Activated CD4-positive, alpha-beta T cell treated with anti-CD3 and anti-CD28 coated beads, Interleukin-2, amount 10 ng/mL, durations not matched to agents 24 days and 14 days (primary cell): ENCODE measurements at regions of chr11 and their contacts with region 1.

Region 1: GRCh38 chr11:83007909-83008580 is 63.7 kb downstream of the RAB30 start:
- DNase-seq: no peak
- H3K4me3 Mint-ChIP-seq: peak overlapping the region; percentile 6
- H3K27ac Mint-ChIP-seq: no peak overlapping the region
- H3K4me1 Mint-ChIP-seq: peaks cover 35% of the 10 kb centered on the region
- H3K27me3 Mint-ChIP-seq: no peaks in the 10 kb centered on the region

Region 2: DNA sequence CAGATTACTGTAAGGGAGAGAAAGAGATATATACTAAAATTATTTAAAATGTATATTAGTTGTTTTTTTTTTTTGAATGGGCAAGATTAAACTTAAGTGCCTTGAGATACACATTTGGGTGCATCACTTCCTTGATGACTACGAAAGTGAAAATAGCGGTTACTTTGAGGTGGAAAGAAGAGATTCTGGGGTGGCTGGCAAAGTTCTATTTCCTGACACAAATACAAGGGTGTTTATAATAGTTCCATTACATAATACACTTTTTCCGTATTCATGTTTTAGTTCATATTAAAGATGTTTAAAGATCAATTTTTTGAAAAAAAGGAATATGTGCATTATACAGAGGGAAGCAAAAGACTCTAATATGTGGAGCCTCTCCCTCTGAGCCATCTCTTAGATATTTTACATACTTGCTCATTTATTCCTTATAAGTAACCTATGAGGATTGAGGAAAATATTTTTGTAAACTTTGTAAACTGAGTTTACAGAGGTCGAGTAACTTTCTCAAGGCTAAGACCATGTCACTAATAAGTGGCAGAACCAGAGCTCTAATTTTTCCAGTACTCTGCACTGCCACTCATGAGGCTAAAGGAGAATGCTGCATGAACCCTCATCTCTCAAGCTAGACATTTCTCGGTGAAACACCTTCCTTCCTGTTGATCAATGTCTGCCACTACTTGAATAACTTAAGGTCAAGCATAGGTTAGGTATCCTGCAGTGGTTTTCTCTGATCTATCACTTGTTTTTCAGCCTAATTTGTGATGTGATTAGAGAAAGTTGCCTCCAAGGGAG is 47.9 kb before region 1 on chr11:
- intact Hi-C with region 1: loop called (anchors 1 kb)
- DNase-seq: peak; percentile 86
- H3K4me3 Mint-ChIP-seq: peak overlapping the region; percentile 62
- H3K27ac Mint-ChIP-seq: peak overlapping the region; percentile 62
- H3K4me1 Mint-ChIP-seq: peaks cover 51% of the 10 kb centered on the region
- H3K27me3 Mint-ChIP-seq: peaks cover 2% of the 10 kb centered on the region

Region 3: GRCh38 chr11:82996966-82997606 is 11.0 kb before region 1 on chr11:
- intact Hi-C with region 1: loop called (anchors 1 kb)
- DNase-seq: no peak
- H3K4me3 Mint-ChIP-seq: no peak overlapping the region
- H3K27ac Mint-ChIP-seq: peak overlapping the region; percentile 35
- H3K4me1 Mint-ChIP-seq: peaks cover 35% of the 10 kb centered on the region
- H3K27me3 Mint-ChIP-seq: no peaks in the 10 kb centered on the region

Region 4: DNA sequence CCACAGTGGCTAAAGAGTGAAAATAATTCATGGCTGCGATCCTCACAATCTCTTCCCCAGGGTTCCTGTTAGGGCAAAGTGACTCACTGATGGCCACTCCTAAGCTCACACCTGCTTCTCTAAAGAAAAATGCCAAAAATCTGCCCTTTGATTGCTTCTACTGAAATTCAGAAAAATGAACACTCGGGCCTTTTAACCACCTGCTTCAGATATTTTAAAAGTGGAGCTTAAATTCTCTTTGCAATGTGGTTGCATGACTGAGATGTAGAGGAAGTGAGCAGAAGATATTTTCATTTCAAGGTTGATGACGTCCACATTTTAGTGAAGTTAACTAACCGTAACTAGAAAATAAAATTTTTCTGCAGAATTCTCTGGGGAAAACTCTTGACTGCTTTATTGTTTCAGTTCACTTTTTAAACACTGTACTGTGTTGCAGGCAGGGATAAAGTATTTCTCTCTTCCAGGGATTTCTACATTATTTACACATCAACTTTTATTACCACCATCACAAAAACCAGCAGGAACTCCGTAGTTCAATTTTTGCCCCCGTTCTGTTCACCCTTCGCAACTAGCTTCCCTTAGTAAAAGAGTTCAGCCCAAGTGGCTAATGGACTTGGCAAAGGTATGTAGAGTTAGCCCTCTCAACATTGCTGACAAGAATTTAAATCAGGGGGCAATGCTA is 55.2 kb after region 1 on chr11:
- intact Hi-C with region 1: loop called (anchors 2 kb)
- DNase-seq: peak; percentile 68
- H3K4me3 Mint-ChIP-seq: peak overlapping the region; percentile 78
- H3K27ac Mint-ChIP-seq: peak overlapping the region; percentile 90
- H3K4me1 Mint-ChIP-seq: peaks cover 24% of the 10 kb centered on the region
- H3K27me3 Mint-ChIP-seq: no peaks in the 10 kb centered on the region

Region 5: GRCh38 chr11:83102834-83103233 is 94.8 kb after region 1 on chr11:
- intact Hi-C with region 1: no loop called
- DNase-seq: no peak
- H3K4me3 Mint-ChIP-seq: no peak overlapping the region
- H3K27ac Mint-ChIP-seq: no peak overlapping the region
- H3K4me1 Mint-ChIP-seq: no peaks in the 10 kb centered on the region
- H3K27me3 Mint-ChIP-seq: peaks cover 29% of the 10 kb centered on the region

Region 6: GRCh38 chr11:83193315-83194280 is 185.6 kb after region 1 on chr11 and contains the start of gene ANKRD42:
- intact Hi-C with region 1: loop called (anchors 5 kb)
- DNase-seq: peak; percentile 96
- H3K4me3 Mint-ChIP-seq: peak within 1 kb of the TSS; percentile 95
- H3K27ac Mint-ChIP-seq: peak within 1 kb of the TSS; percentile 90
- H3K4me1 Mint-ChIP-seq: peaks cover 33% of the 10 kb centered on the region
- H3K27me3 Mint-ChIP-seq: no peaks in the 10 kb centered on the region
- total RNA-seq, gene ANKRD42: 4.0 and 4.1 TPM in 2 replicates